ENCODE measurements at regions of chr1 and their contacts with region 1.

Region 1: DNA sequence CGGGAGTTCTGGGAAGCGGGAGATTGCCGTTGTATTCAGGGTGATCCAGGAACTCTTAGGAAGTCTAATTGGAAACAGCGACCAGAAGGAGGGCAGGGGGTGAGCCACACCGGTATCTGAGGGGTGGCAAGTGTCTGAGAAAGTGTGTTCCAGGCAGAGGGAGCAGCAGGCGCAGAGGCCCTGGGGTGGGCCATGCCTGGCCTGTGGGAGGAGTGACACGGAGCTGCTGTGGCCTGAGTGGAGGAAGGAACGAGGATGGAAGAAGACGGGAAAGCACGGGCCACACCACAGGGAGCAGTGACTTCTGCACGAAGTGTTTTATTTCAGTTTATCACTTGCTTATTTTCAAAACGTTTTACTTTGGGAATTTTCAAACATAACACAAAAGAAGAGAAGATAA is 11.3 kb downstream of the PER3 start:
- DNase-seq: no peak
- H3K4me3 ChIP-seq: no peak overlapping the region
- H3K27ac ChIP-seq: no peak overlapping the region
- H3K4me1 ChIP-seq: no peaks in the 10 kb centered on the region
- H3K27me3 ChIP-seq: no peaks in the 10 kb centered on the region
- CTCF ChIP-seq: no peak
- EP300 ChIP-seq: no peak
- POLR2A ChIP-seq: no peak

Region 2: DNA sequence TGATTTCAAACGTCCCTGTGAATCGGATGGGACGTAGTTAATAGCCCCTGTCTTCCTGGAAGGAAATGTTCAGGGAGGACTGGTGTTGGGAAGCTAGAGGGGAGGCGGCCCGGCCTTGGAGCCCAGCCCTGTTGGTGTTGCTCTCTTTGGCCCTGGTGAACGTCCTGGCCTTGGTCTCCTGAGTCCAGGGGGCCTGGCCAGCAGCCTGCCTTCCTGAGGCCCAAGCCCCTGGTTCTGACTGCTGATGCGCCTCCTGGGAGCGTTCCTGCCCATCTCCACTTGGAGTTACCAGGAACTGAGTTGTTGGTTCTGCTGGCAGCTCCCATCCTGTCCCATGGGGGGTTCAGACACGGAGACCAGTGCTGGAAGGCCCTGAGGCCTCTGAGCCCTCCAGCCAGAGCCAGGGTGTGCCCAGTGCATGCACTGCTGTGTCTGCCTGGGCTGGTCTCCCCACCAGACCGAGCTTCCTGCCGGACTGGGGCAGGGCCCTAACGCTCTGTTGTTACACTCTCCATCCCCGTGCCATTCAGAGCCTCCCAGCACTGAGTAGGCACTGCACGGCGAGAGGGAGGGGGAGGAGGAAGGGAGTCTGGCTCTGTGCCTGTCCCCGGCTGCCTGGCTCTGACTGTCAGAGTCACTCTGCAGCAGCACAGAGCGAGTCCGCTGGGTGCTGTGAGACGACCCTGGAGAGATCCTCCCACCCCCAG is 406.8 kb before region 1 on chr1:
- in situ Hi-C with region 1: no loop called
- intact Hi-C with region 1: no loop called
- DNase-seq: no peak
- H3K4me3 ChIP-seq: no peak overlapping the region
- H3K27ac ChIP-seq: peak overlapping the region in 3 of 4 donors; percentile 21 to 30 (median 30)
- H3K4me1 ChIP-seq: peaks cover 0 to 14% (median 3%) of the 10 kb centered on the region in 4 donors
- H3K27me3 ChIP-seq: no peaks in the 10 kb centered on the region
- CTCF ChIP-seq: no peak
- EP300 ChIP-seq: no peak
- POLR2A ChIP-seq: no peak

Region 3: GRCh38 chr1:7821282-7821681 is 25.9 kb after region 1 on chr1:
- in situ Hi-C with region 1: no loop called
- intact Hi-C with region 1: loop called (anchors 2 kb)
- DNase-seq: no peak
- H3K4me3 ChIP-seq: no peak overlapping the region
- H3K27ac ChIP-seq: no peak overlapping the region
- H3K4me1 ChIP-seq: no peaks in the 10 kb centered on the region
- H3K27me3 ChIP-seq: no peaks in the 10 kb centered on the region
- CTCF ChIP-seq: no peak
- EP300 ChIP-seq: no peak
- POLR2A ChIP-seq: no peak

Region 4: DNA sequence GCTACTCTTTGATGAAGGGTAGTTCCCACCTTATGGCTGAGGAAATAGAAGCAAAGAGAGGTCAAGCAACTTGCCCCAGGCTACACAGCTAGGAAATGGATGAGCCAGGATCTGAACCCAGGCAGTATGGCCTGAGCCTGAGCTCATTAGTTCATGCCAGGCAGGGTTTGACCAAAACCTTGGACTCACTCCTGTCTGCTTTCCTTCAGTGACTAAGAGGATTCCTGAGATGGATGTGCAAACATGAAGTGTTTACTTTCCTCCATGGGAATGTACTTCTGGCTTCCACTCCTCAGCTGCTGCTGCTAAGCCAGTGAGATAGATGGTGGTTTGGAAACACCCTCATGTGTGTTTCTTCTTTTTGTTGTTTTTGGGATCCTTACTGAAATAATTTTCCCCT is 265.8 kb after region 1 on chr1:
- in situ Hi-C with region 1: no loop called
- intact Hi-C with region 1: no loop called
- DNase-seq: no peak
- H3K4me3 ChIP-seq: no peak overlapping the region
- H3K27ac ChIP-seq: peak overlapping the region; percentile 53 to 76 (median 64)
- H3K4me1 ChIP-seq: peaks cover 0 to 11% (median 5%) of the 10 kb centered on the region in 4 donors
- H3K27me3 ChIP-seq: no peaks in the 10 kb centered on the region
- CTCF ChIP-seq: no peak
- EP300 ChIP-seq: no peak
- POLR2A ChIP-seq: no peak